ENCODE measurements at regions of chr20 and their contacts with region 1.

Region 1: GRCh38 chr20:16801919-16802911 is 54.1 kb downstream of the OTOR start:
- DNase-seq: peak; percentile 78
- H3K4me3 Mint-ChIP-seq: no peak overlapping the region
- H3K27ac Mint-ChIP-seq: no peak overlapping the region
- H3K4me1 Mint-ChIP-seq: no peaks in the 10 kb centered on the region
- H3K27me3 Mint-ChIP-seq: peaks cover 46% of the 10 kb centered on the region

Region 2: DNA sequence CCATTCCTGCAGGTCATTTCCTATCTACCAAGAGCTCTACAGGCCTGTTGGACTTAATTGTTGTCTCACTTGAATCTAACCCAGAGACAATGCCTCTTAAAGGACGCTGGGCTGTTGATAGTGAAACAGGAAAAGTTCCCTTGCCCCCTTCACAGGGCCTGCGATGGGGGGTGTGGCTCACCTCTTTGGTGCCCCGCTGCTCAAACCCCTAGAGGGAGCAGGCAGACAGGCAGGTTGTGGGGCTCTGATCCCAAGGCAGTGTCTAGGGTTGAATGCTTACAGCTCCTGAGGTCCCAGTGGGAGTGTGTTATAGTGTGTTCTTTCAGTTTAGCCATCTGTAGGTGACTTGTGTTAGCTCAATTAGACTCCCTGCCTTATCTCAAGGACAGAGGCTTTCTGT is 14.0 kb after region 1 on chr20:
- CTCF ChIA-PET with region 1: interaction called, 118 read pairs
- intact Hi-C with region 1: loop called (anchors 1 kb)
- DNase-seq: no peak
- H3K4me3 Mint-ChIP-seq: no peak overlapping the region
- H3K27ac Mint-ChIP-seq: no peak overlapping the region
- H3K4me1 Mint-ChIP-seq: no peaks in the 10 kb centered on the region
- H3K27me3 Mint-ChIP-seq: peaks cover 5% of the 10 kb centered on the region

Region 3: GRCh38 chr20:16848061-16848460 is 45.8 kb after region 1 on chr20:
- CTCF ChIA-PET with region 1: no interaction called
- intact Hi-C with region 1: no loop called
- DNase-seq: no peak
- H3K4me3 Mint-ChIP-seq: no peak overlapping the region
- H3K27ac Mint-ChIP-seq: no peak overlapping the region
- H3K4me1 Mint-ChIP-seq: no peaks in the 10 kb centered on the region
- H3K27me3 Mint-ChIP-seq: peaks cover 5% of the 10 kb centered on the region

Measured in activated naive CD4-positive, alpha-beta T cell treated with anti-CD3 and anti-CD28 coated beads for 36 hours (primary cell).